ENCODE measurements at regions of chr7 and their contacts with region 1.

Region 1: DNA sequence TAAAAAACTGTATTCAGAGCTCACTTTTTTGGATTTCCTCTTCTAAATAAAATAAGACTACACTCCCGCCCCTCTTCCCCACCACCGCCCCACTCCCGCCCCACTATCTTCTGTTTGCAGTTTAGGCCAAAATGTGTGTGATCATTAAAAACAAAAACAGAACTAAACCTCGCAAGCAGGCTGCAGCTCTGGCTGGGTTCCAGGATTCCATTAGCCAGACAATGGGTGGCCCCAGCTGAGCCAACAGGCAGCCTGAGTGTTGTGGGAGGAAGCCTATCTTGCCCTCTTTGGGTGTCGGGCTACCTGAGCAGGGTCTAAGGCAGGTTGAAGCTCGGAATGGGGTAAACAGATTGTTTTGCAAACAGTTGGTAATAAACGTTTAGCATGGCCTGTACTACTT is 41.7 kb downstream of the ARL4A start:
- DNase-seq: peak in 1 of 14 experiments; percentile 7
- ATAC-seq: no peak
- H3K4me3 ChIP-seq: no peak overlapping the region
- H3K4me3 Mint-ChIP-seq: no peak overlapping the region
- H3K27ac ChIP-seq: no peak overlapping the region
- H3K27ac Mint-ChIP-seq: no peak overlapping the region
- H3K4me1 ChIP-seq: peaks cover 8% of the 10 kb centered on the region
- H3K4me1 Mint-ChIP-seq: peaks cover 24% of the 10 kb centered on the region
- H3K27me3 ChIP-seq: no peaks in the 10 kb centered on the region
- H3K27me3 Mint-ChIP-seq: no peaks in the 10 kb centered on the region
- CTCF ChIP-seq: no peak

Region 2: GRCh38 chr7:12783421-12784095 is 54.4 kb after region 1 on chr7:
- CTCF ChIA-PET with region 1: no interaction called
- POLR2A ChIA-PET with region 1: no interaction called
- intact Hi-C with region 1: loop called in 1 of 2 experiments (anchors 10 kb)
- DNase-seq: no peak
- ATAC-seq: no peak
- H3K4me3 ChIP-seq: no peak overlapping the region
- H3K4me3 Mint-ChIP-seq: no peak overlapping the region
- H3K27ac ChIP-seq: no peak overlapping the region
- H3K27ac Mint-ChIP-seq: no peak overlapping the region
- H3K4me1 ChIP-seq: no peaks in the 10 kb centered on the region
- H3K4me1 Mint-ChIP-seq: no peaks in the 10 kb centered on the region
- H3K27me3 ChIP-seq: no peaks in the 10 kb centered on the region
- H3K27me3 Mint-ChIP-seq: no peaks in the 10 kb centered on the region
- CTCF ChIP-seq: no peak

Region 3: GRCh38 chr7:12861070-12861469 is 132.0 kb after region 1 on chr7:
- CTCF ChIA-PET with region 1: no interaction called
- POLR2A ChIA-PET with region 1: no interaction called
- intact Hi-C with region 1: loop called in 1 of 2 experiments (anchors 10 kb)
- DNase-seq: no peak
- ATAC-seq: no peak
- H3K4me3 ChIP-seq: no peak overlapping the region
- H3K4me3 Mint-ChIP-seq: no peak overlapping the region
- H3K27ac ChIP-seq: no peak overlapping the region
- H3K27ac Mint-ChIP-seq: no peak overlapping the region
- H3K4me1 ChIP-seq: no peaks in the 10 kb centered on the region
- H3K4me1 Mint-ChIP-seq: no peaks in the 10 kb centered on the region
- H3K27me3 ChIP-seq: no peaks in the 10 kb centered on the region
- H3K27me3 Mint-ChIP-seq: no peaks in the 10 kb centered on the region
- CTCF ChIP-seq: no peak